ENCODE measurements at regions of chr20 and their contacts with region 1.

Region 1: DNA sequence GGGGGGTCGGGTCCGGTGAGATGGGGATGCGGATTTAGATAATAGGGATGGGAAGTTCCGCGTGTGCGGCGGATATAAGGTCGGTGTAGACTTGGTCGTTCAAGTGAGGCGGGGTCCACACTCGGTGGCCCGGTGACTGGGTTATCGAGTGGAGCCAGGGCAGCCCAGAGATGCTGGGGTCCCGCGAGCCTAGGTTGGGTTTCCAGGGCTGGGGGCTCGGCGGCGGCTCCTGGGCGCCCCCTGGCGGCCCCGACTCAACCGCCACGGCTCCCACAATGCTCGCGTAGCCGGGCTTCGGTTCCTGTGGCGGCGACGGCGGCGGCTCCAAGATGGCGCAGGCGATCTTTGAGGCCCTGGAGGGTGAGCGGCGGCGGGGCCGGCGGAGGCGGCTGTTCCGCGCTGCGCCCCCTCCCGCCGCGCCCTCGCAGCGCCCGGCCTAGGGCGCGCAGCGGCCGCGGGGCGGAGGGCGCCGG is at the start of gene ZNF341:
- DNase-seq: no peak
- ATAC-seq: peak; percentile 79
- H3K4me3 Mint-ChIP-seq: peak within 1 kb of the TSS; percentile 90
- H3K27ac Mint-ChIP-seq: peak within 1 kb of the TSS; percentile 93
- H3K4me1 Mint-ChIP-seq: peaks cover 26% of the 10 kb centered on the region
- H3K27me3 Mint-ChIP-seq: no peaks in the 10 kb centered on the region
- CTCF ChIP-seq: no peak
- total RNA-seq, gene ZNF341: 9.2 and 10.1 TPM in 2 replicates

Region 2: GRCh38 chr20:33624399-33624798 is 107.3 kb before region 1 on chr20:
- CTCF ChIA-PET with region 1: no interaction called
- POLR2A ChIA-PET with region 1: no interaction called
- intact Hi-C with region 1: no loop called
- DNase-seq: no peak
- ATAC-seq: no peak
- H3K4me3 Mint-ChIP-seq: no peak overlapping the region
- H3K27ac Mint-ChIP-seq: peak overlapping the region; percentile 22
- H3K4me1 Mint-ChIP-seq: peaks cover 20% of the 10 kb centered on the region
- H3K27me3 Mint-ChIP-seq: no peaks in the 10 kb centered on the region
- CTCF ChIP-seq: no peak

Region 3: DNA sequence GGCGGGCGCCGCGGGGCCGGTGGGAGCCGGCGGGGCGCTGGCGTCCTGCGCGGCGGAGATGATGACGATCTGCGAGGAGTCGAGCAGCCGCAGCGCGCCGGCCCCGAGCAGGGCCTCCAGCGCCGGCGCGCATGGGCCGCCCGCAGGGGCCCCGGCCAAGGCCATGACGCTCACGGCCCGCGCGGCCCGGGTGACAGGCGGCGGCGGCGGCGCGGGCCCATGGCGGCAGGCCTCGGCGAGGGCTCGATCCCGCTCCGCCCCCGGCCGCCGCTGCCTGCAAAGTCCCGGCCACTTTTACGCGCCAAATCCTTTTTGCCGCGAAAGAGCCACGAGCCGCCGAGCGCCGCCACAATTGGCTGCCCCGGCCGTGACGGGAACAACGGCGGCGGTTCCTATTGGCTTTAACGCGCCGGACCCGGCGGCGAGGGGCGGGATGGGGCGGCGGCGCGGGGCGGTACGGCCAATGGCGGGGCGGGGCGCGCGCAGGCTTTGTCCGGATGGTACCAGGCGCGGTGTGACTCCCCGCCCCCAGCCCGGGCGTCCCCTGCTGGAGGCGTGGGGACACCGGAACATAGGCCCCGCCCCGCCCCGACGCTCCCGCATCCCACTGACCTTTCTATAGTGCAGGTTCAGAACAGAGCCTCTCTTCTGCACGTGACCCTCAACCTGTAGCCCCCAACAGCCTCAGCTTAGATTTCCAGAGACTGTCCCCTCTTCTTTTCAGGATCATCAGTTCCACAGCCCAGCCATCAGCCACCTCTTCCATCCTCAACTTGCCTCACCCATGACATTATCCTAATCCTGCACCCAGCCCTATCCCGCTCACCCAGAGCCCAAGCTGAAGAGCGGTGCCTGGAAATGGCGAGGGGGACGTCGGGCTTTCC is 45.4 kb before region 1 on chr20 and contains the start of gene E2F1:
- CTCF ChIA-PET with region 1: no interaction called
- POLR2A ChIA-PET with region 1: interaction called, 9 read pairs
- intact Hi-C with region 1: loop called (anchors 1 kb)
- DNase-seq: peak; percentile 95
- ATAC-seq: peak; percentile 93
- H3K4me3 Mint-ChIP-seq: peak within 1 kb of the TSS; percentile 86
- H3K27ac Mint-ChIP-seq: peak within 1 kb of the TSS; percentile 77
- H3K4me1 Mint-ChIP-seq: peaks cover 30% of the 10 kb centered on the region
- H3K27me3 Mint-ChIP-seq: no peaks in the 10 kb centered on the region
- CTCF ChIP-seq: no peak
- total RNA-seq, gene E2F1: 6.7 and 8.9 TPM in 2 replicates

Region 4: DNA sequence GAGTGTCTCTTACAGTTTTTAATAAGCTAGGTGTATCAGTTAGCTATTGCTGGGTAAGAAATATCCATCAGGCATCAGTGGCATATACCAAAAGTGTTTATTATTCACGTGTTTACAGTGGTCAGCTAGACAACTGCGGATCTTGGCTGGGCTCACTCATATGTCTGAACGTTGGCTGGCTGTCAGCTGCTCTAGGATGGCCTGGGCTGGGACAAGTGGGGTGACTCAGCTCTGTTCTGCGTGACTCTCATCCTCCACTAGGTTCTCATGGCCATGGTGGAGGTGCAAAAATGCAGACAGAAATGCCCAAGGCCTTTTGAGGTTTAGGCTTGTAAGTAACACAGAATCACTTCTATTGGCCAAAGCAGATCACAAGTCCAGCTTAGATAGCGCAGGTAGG is 22.0 kb after region 1 on chr20:
- CTCF ChIA-PET with region 1: interaction called, 4 read pairs
- POLR2A ChIA-PET with region 1: interaction called, 15 read pairs
- intact Hi-C with region 1: no loop called
- DNase-seq: no peak
- ATAC-seq: no peak
- H3K4me3 Mint-ChIP-seq: no peak overlapping the region
- H3K27ac Mint-ChIP-seq: no peak overlapping the region
- H3K4me1 Mint-ChIP-seq: peaks cover 13% of the 10 kb centered on the region
- H3K27me3 Mint-ChIP-seq: no peaks in the 10 kb centered on the region
- CTCF ChIP-seq: no peak

Region 5: DNA sequence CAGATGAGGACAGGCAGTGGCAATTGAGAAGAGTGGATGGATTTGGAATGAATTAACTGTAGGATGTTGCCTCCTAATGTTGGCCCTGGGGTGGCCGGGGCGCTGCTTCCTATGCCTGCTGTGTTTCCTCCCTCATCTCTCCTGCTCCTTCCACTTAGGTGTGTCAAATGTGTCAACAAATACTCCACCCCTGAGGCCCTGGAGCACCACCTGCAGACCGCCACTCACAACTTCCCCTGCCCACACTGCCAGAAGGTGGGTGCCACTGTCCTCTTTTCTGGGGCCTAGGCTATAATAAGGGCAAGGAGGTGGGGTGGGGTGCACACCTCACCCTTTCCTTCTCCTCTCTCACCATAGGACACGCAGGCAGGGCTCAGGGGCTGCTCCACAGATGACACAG is 49.4 kb after region 1 on chr20:
- CTCF ChIA-PET with region 1: interaction called, 7 read pairs
- POLR2A ChIA-PET with region 1: interaction called, 102 read pairs
- intact Hi-C with region 1: loop called (anchors 1 kb)
- DNase-seq: no peak
- ATAC-seq: no peak
- H3K4me3 Mint-ChIP-seq: peak overlapping the region; percentile 12
- H3K27ac Mint-ChIP-seq: peak overlapping the region; percentile 95
- H3K4me1 Mint-ChIP-seq: peaks cover 86% of the 10 kb centered on the region
- H3K27me3 Mint-ChIP-seq: no peaks in the 10 kb centered on the region
- CTCF ChIP-seq: no peak

Region 6: DNA sequence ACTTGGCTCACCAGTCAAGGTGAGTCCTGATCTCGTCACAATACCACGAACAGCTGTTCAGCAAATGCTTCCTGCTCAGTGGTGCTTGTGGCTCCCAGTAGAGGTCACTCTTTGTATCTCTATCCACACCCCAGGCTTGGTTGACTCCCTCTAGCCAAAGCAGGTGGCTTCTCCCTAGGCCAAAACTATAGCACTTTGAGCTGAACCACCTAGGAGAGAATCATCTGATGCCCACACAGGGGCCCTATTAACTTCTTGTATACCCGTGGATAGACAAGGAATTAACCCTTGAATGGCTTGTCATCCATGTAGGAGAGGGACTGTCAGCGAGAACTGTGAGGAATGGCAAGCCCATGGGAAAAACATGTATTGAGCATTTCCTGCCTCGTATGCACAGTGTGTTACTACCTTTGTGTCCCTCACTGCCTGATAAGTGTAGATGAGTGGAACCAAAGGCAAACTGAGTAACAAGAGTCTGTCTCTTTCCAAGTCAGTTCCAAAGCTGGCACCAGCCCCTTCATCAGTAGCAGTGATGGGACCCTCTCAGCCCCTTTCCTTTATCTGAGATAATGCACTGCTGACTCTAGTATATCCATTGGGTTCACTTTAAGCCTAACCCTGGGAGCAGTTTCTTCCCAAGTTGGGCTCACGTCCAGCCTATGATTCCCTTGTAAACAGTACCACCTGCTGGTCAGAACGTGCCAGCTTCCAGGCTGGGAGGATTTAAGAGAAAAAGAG is 337.8 kb after region 1 on chr20:
- CTCF ChIA-PET with region 1: no interaction called
- POLR2A ChIA-PET with region 1: no interaction called
- intact Hi-C with region 1: loop called (anchors 1 kb)
- DNase-seq: no peak
- ATAC-seq: peak; percentile 89
- H3K4me3 Mint-ChIP-seq: no peak overlapping the region
- H3K27ac Mint-ChIP-seq: peak overlapping the region; percentile 61
- H3K4me1 Mint-ChIP-seq: peaks cover 24% of the 10 kb centered on the region
- H3K27me3 Mint-ChIP-seq: no peaks in the 10 kb centered on the region
- CTCF ChIP-seq: peak; percentile 36

Region 7: DNA sequence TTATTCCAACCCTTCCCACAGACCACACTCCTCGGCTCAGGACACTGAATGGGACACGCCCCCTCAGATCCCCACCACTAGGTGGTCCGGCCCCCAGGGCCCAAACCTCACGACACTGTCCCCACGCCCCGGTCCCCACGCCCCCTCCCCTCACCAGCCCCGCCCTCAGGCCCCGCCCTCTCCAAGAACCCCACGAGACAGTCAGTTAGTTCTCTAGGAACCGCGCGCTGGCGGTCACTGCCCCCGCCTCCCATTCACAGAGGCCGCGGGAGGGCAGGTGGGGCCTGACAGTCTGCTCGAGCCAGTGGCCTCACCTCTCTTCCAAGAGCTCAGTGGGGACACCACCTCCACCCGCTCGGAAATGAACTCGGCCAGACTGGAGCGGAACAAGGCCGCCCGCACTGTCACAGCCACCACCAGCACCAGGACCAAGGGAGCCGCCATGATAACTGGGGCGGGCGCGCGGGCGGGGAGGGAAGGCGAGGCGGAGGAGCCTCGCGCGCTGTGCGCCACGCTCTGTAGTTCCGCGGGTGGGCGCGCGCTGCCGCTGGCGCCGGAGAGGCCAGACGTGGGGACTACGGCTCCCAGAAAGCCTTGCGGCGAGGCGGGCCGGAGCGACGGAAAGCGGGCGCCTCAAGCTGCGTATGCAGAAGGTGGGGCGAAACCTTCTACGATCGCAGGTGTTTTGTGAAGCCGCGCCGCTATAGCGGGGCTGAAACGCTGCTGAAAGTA is 945.1 kb after region 1 on chr20 and contains the start of gene PIGU:
- CTCF ChIA-PET with region 1: no interaction called
- POLR2A ChIA-PET with region 1: no interaction called
- intact Hi-C with region 1: no loop called
- DNase-seq: peak; percentile 91
- ATAC-seq: peak; percentile 94
- H3K4me3 Mint-ChIP-seq: peak within 1 kb of the TSS; percentile 98
- H3K27ac Mint-ChIP-seq: peak within 1 kb of the TSS; percentile 95
- H3K4me1 Mint-ChIP-seq: peaks cover 15% of the 10 kb centered on the region
- H3K27me3 Mint-ChIP-seq: no peaks in the 10 kb centered on the region
- CTCF ChIP-seq: no peak
- total RNA-seq, gene PIGU: 14.7 and 15.3 TPM in 2 replicates